GM23248 (cell line): ENCODE measurements at regions of chr22 and their contacts with region 1.

Region 1: GRCh38 chr22:37599153-37599552 is 9.5 kb upstream of the GGA1 start:
- DNase-seq: no peak
- H3K4me3 ChIP-seq: no peak overlapping the region
- H3K27ac ChIP-seq: no peak overlapping the region
- H3K4me1 ChIP-seq: peaks cover 4% of the 10 kb centered on the region; the same call in 1 of the 2 replicates
- H3K27me3 ChIP-seq: no peaks in the 10 kb centered on the region

Region 2: DNA sequence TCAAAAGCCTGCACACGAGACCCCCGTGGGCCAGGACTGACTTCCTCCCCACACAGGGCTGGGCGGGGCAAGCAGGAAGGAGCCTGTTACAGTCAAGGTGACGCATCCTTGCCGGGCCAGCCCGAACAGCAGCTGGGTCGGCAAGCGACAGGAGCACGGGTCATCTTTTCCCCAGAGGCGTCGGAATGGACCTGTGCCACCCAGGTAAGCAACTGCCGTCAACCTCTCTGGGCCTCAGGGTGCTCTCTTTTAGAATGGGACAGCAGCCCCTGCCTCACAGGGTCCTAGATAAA is 316.8 kb before region 1 on chr22 and contains the start of gene CYTH4:
- in situ Hi-C with region 1: no loop called
- DNase-seq: no peak
- H3K4me3 ChIP-seq: no peak within 1 kb of the TSS
- H3K27ac ChIP-seq: no peak within 1 kb of the TSS
- H3K4me1 ChIP-seq: no peaks in the 10 kb centered on the region
- H3K27me3 ChIP-seq: no peaks in the 10 kb centered on the region
- total RNA-seq, gene CYTH4: not detected in 2 replicates

Region 3: GRCh38 chr22:37538590-37539357 is 60.4 kb before region 1 on chr22:
- in situ Hi-C with region 1: loop called (anchors 10 kb)
- DNase-seq: peak; percentile 95
- H3K4me3 ChIP-seq: 0 out of 2 replicates have a peak overlapping the region, but pooled peaks have one; percentile 18
- H3K27ac ChIP-seq: no peak overlapping the region
- H3K4me1 ChIP-seq: peaks cover 15% of the 10 kb centered on the region
- H3K27me3 ChIP-seq: no peaks in the 10 kb centered on the region